A549 (cell line): ENCODE measurements at regions of chr9 and their contacts with region 1.

Region 1: GRCh38 chr9:129726322-129727160 is 26.3 kb downstream of the PTGES start:
- DNase-seq: peak; percentile 87 to 97
- ATAC-seq: peak; percentile 91 to 97
- H3K4me3 ChIP-seq: no peak overlapping the region
- H3K27ac ChIP-seq: peak overlapping the region in 1 of 2 experiments; percentile 73; a peak in 3 of 6 replicates
- H3K4me1 ChIP-seq: no peaks in the 10 kb centered on the region
- CTCF ChIP-seq: peak; percentile 93
- EP300 ChIP-seq: no peak
- POLR2A ChIP-seq: no peak
- RAD21 ChIP-seq: peak; percentile 87 to 91

Region 2: DNA sequence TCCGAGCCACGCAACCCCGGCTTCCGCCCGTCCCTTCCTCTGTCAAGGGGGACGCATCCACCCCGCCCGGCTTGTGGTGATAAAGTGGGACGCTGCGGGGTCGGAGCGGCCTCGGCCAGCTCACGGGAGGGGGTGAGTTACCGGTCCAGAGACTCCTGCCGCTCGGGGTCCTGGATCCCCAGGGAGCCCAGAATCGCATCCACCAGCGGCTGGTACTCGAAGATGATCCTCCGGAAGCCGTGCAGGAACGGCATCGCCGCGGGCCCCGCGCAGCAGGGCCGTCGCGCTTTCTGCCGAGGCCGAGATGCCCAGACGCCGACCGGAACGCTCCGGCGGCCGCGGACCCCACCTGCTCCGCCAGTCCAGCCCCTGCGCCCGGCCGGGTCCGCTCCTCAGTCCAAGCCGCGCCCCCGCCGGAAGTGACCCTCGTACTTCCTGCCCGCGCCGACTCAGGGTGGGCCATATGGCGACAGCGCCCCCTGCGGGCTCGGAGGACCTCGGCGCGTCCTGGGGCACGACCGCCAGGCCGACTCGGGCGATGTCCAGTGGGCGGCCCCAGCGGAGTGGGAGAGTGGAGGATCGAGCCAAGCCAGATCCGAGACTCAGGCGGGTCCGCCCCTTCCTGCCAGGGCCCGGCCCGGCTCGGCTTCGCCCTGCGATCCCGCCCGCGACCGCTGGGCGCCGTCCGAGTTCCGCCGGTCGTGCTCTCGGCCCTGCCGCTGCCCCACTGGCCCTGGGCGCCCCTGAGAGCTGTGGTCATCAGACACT is 84.6 kb before region 1 on chr9 and contains the start of gene ASB6:
- CTCF ChIA-PET with region 1: interaction called, 103 read pairs
- POLR2A ChIA-PET with region 1: no interaction called
- DNase-seq: peak; percentile 98
- ATAC-seq: peak; percentile 93 to 97
- H3K4me3 ChIP-seq: peak within 1 kb of the TSS; percentile 87
- H3K27ac ChIP-seq: peak within 1 kb of the TSS; percentile 83 to 94
- H3K4me1 ChIP-seq: peaks cover 18% of the 10 kb centered on the region
- CTCF ChIP-seq: peak; percentile 99
- EP300 ChIP-seq: no peak
- POLR2A ChIP-seq: peak; percentile 60
- RAD21 ChIP-seq: peak; percentile 87 to 99
- polyA plus RNA-seq, gene ASB6: 9.2 and 9.4 TPM in 2 replicates

Region 3: GRCh38 chr9:129676975-129677841 is 49.3 kb before region 1 on chr9:
- CTCF ChIA-PET with region 1: interaction called, 20 read pairs
- POLR2A ChIA-PET with region 1: no interaction called
- DNase-seq: no peak
- ATAC-seq: peak in 1 of 2 experiments; percentile 43; a peak in 2 of 6 replicates
- H3K4me3 ChIP-seq: no peak overlapping the region
- H3K27ac ChIP-seq: no peak overlapping the region
- H3K4me1 ChIP-seq: no peaks in the 10 kb centered on the region
- CTCF ChIP-seq: no peak
- EP300 ChIP-seq: no peak
- POLR2A ChIP-seq: no peak
- RAD21 ChIP-seq: no peak

Region 4: GRCh38 chr9:129696938-129697650 is 29.4 kb before region 1 on chr9:
- CTCF ChIA-PET with region 1: interaction called, 45 read pairs
- POLR2A ChIA-PET with region 1: interaction called, 3 read pairs
- DNase-seq: peak; percentile 44 to 60
- ATAC-seq: peak; percentile 76 to 85
- H3K4me3 ChIP-seq: peak overlapping the region; percentile 64
- H3K27ac ChIP-seq: peak overlapping the region; percentile 97
- H3K4me1 ChIP-seq: peaks cover 13% of the 10 kb centered on the region
- CTCF ChIP-seq: no peak
- EP300 ChIP-seq: no peak
- POLR2A ChIP-seq: peak; percentile 43
- RAD21 ChIP-seq: no peak

Region 5: DNA sequence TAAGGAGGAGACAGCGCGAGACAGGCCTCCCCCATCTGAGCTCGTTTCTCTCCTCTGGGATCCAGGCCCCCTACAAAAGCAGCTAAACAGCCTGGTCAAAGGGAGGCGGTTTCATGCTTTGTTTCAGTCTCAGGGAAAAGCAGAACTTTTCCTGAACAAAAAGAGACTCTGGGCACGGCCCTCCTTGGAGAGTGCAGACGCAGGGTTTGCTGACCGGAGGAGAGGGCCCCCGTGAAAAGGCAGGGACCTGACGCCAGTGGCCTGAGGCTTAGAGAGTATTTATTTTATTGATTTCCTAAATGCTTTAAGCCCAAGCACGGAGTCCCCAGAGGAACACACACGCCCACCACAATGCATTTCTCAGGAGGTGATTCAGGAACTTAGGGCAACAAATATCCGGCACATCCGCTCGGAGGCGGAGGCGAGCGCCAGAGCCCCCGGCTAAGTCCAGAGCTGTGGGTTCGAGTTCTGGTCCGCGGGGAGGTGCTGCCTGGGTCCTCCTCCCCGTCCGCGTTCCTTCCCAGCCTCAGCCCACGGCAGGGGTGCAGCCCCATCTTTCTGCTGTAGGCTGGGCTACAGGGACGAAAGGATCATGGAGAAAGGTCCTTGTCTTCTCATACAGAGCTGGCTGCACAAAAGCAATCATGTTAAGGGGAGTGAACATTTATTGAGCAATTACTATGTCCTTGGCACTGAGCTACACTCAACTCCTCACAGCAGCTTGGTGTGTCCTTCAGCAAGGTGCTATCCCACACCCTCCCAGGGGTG is 13.7 kb before region 1 on chr9:
- CTCF ChIA-PET with region 1: interaction called, 61 read pairs
- POLR2A ChIA-PET with region 1: no interaction called
- DNase-seq: no peak
- ATAC-seq: no peak
- H3K4me3 ChIP-seq: no peak overlapping the region
- H3K27ac ChIP-seq: no peak overlapping the region
- H3K4me1 ChIP-seq: no peaks in the 10 kb centered on the region
- CTCF ChIP-seq: no peak
- EP300 ChIP-seq: no peak
- POLR2A ChIP-seq: no peak
- RAD21 ChIP-seq: no peak

Region 6: GRCh38 chr9:129761901-129762364 is 35.4 kb after region 1 on chr9:
- CTCF ChIA-PET with region 1: interaction called, 12 read pairs
- POLR2A ChIA-PET with region 1: no interaction called
- DNase-seq: peak in 1 of 2 experiments; percentile 85
- ATAC-seq: peak; percentile 81 to 87
- H3K4me3 ChIP-seq: no peak overlapping the region
- H3K27ac ChIP-seq: peak overlapping the region; percentile 59 to 91
- H3K4me1 ChIP-seq: peaks cover 25% of the 10 kb centered on the region
- CTCF ChIP-seq: no peak
- EP300 ChIP-seq: no peak
- POLR2A ChIP-seq: no peak
- RAD21 ChIP-seq: no peak